ENCODE measurements at regions of chr17 and their contacts with region 1.

Region 1: GRCh38 chr17:5533486-5534315 is 47.3 kb downstream of the MIS12 start:
- DNase-seq: no peak
- ATAC-seq: no peak
- H3K4me3 Mint-ChIP-seq: no peak overlapping the region
- H3K27ac Mint-ChIP-seq: no peak overlapping the region
- H3K4me1 Mint-ChIP-seq: no peaks in the 10 kb centered on the region
- H3K27me3 Mint-ChIP-seq: no peaks in the 10 kb centered on the region
- CTCF ChIP-seq: no peak

Region 2: GRCh38 chr17:6402258-6402657 is 868.6 kb after region 1 on chr17:
- CTCF ChIA-PET with region 1: no interaction called
- POLR2A ChIA-PET with region 1: interaction called, 17 read pairs
- intact Hi-C with region 1: no loop called
- DNase-seq: no peak
- ATAC-seq: no peak
- H3K4me3 Mint-ChIP-seq: no peak overlapping the region
- H3K27ac Mint-ChIP-seq: no peak overlapping the region
- H3K4me1 Mint-ChIP-seq: no peaks in the 10 kb centered on the region
- H3K27me3 Mint-ChIP-seq: peaks cover 6% of the 10 kb centered on the region
- CTCF ChIP-seq: no peak

Measured in activated B cell treated with CpG ODN at 0.5 μM for 24 hours (primary cell).